Heart right ventricle (tissue), 16 donors: ENCODE measurements at regions of chr2 and their contacts with region 1.

Region 1: DNA sequence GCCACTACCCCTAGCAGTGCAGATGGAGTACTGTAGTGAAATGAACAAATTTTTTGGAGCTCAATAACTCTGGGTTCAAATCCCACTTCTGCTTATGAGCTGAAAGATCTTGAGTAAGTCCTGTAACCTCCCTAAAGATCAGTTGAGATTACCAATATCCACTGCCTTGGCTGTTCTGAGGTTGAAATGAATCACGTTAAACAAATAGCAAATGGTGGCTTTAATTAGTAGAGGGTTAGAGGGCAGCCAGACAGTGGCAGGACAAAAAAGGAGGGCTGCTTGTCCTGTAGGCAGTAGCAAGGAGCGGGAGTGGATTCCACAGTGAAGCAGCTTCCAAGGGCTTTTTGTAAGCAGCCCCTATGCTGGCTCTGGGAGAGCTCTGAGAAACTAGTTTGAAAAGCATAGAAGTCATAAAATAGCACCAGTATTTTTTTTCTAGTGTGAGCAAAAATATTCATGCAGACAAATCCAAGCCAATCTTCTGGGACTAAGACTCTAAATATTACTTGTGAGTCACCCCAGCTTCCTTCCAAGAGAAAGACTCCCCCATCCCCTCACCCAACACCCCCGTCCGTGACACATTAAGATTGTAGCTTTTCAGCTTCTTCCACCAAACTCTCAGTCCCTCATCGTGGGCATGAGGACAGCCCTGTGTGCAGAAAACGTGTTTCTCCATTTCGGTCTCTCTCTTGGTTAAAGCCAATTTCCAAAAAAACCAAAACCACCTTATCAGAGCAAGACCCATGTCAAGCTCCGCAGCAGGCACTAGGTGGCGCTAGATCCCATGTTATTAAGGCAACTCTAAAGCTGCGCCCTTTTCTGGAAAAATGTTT is 123.5 kb upstream of the LGALSL start:
- DNase-seq: peak; percentile 71 to 86
- ATAC-seq: peak; percentile 58 to 82 (median 74)
- H3K4me3 ChIP-seq: peak overlapping the region in 6 of 10 donors; percentile 16 to 32 (median 24)
- H3K27ac ChIP-seq: peak overlapping the region; percentile 58 to 85 (median 77)
- H3K4me1 ChIP-seq: peaks cover 15 to 49% (median 40%) of the 10 kb centered on the region in 9 donors
- H3K27me3 ChIP-seq: no peaks in the 10 kb centered on the region
- CTCF ChIP-seq: peak; percentile 86 to 95 (median 90)

Region 2: GRCh38 chr2:64045938-64046337 is 284.6 kb before region 1 on chr2:
- intact Hi-C with region 1: loop called in 8 of 10 experiments (anchors 1 to 5 kb)
- DNase-seq: no peak
- ATAC-seq: no peak
- H3K4me3 ChIP-seq: no peak overlapping the region
- H3K27ac ChIP-seq: no peak overlapping the region
- H3K4me1 ChIP-seq: peaks cover 0 to 8% (median 7%) of the 10 kb centered on the region in 9 donors
- H3K27me3 ChIP-seq: no peaks in the 10 kb centered on the region
- CTCF ChIP-seq: no peak

Region 3: DNA sequence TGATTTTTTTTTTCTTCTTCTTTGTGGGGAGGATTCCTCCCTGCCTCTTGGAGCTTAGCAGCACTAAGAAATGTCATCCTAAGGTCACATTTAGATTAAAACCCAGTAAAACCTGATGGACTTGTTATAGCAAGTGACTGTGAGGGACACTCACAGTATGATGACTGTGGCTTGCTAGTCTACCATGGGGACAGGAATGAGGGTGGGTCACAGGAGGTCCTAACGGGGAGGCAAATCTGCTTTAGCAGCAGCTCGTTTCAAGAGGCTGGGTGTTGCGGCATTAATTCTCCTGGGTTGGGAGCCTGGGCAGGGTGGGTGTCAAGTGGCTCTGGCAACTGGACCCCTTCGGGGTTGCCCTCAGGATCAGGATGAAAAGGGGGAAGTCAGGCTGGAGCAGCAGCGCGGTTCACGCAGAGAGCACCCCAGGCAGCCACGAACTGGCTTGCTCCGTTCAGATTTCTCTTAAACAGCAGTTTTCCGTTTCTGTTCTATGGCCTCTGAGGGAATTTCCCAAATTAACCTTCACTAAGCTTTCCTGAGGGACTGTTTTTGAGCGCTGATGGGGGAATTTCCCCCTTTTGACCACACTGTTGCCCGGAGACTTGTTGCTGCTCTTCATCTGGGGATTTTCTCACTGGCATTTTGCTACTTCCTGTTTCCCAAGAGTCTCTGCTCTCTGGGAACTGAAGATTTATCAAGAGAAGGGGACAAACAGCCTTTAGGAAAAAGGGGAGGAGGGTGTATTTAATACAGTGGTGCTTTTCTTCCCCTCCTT is 126.5 kb before region 1 on chr2:
- intact Hi-C with region 1: loop called in 1 of 10 experiments (anchors 5 kb)
- DNase-seq: peak; percentile 30 to 40
- ATAC-seq: peak in 7 of 8 donors; percentile 55 to 74 (median 68)
- H3K4me3 ChIP-seq: peak overlapping the region in 6 of 10 donors; percentile 11 to 37 (median 26)
- H3K27ac ChIP-seq: peak overlapping the region; percentile 48 to 89 (median 78)
- H3K4me1 ChIP-seq: peaks cover 2 to 57% (median 40%) of the 10 kb centered on the region in 9 donors
- H3K27me3 ChIP-seq: no peaks in the 10 kb centered on the region
- CTCF ChIP-seq: no peak

Region 4: GRCh38 chr2:64363848-64364247 is 33.4 kb after region 1 on chr2:
- intact Hi-C with region 1: no loop called
- DNase-seq: no peak
- ATAC-seq: no peak
- H3K4me3 ChIP-seq: no peak overlapping the region
- H3K27ac ChIP-seq: no peak overlapping the region
- H3K4me1 ChIP-seq: peaks cover 0 to 16% (median 10%) of the 10 kb centered on the region in 9 donors
- H3K27me3 ChIP-seq: peaks cover 0 to 55% (median 4%) of the 10 kb centered on the region in 7 donors
- CTCF ChIP-seq: no peak

Region 5: DNA sequence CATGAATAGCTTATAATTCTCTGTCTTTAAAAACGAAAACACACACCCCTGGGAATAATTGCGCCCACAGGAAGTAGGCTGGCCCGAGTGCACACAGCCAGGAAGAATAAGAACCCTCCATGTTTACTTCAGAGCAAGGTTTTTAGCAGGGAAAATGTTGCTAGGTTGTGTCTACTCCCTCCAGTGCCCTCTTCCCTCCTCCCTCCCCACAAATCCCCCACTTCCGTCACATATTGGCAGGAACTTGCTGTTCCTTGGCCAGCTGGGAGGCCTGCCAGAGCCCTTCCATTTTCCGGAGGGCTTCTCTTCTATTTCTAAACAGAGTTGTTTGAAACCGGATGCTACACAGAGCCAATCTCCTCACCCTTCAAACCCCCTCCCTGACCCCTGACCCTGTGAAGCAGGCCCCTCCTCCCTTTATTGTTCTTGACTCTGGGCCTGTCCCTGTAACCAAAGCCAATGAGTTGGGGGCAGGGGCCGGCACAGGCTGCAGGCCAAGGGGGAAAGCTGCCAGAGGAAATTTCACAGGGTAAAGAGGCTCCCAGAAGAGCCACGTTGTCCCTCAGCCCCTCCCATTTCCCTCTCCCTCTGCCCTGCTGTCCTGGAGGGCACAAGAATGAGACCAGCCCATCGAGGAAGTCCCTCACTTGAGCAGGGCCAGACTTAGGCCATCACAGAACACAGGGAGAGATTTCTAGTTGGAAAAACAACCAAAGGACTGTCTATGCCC is 73.7 kb after region 1 on chr2:
- intact Hi-C with region 1: loop called in 5 of 10 experiments (anchors 2 to 10 kb)
- DNase-seq: peak; percentile 87 to 93
- ATAC-seq: peak; percentile 90 to 96 (median 94)
- H3K4me3 ChIP-seq: peak overlapping the region in 4 of 10 donors; percentile 1 to 27 (median 6)
- H3K27ac ChIP-seq: peak overlapping the region; percentile 56 to 92 (median 86)
- H3K4me1 ChIP-seq: peaks cover 14 to 52% (median 45%) of the 10 kb centered on the region in 9 donors
- H3K27me3 ChIP-seq: no peaks in the 10 kb centered on the region
- CTCF ChIP-seq: no peak

Region 6: DNA sequence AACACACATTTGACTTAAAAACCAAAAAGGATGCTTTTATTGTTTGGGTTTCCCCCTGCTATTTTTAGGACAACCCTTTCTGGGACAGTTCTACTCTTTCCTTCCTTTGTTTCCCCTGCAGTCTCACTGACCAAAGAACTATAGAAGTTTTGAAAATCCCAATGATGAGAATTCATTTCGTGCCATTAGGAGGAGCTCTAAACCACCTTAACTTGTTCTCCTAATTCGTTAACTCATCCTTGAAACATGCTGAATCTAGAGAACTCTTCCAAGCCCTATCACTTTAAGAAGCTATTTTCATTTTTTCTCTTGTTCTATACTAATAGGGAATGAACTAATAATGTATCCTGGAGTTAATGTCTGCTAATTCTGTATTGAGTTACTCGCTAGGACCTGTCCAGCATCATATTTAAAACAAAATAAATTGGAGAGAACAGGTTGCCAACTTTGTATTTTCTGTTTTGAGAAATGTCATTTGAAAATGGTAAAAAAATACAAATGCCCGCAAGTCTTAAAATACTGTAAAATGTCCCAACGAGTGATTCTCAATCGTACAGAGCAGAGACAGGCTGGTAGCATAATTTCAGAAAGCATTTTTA is 256.5 kb after region 1 on chr2:
- intact Hi-C with region 1: loop called in 1 of 10 experiments (anchors 5 kb)
- DNase-seq: no peak
- ATAC-seq: peak in 6 of 8 donors; percentile 55 to 77 (median 65)
- H3K4me3 ChIP-seq: no peak overlapping the region
- H3K27ac ChIP-seq: no peak overlapping the region
- H3K4me1 ChIP-seq: peaks cover 0 to 13% (median 8%) of the 10 kb centered on the region in 9 donors
- H3K27me3 ChIP-seq: no peaks in the 10 kb centered on the region
- CTCF ChIP-seq: peak; percentile 27 to 80 (median 65)

Region 7: DNA sequence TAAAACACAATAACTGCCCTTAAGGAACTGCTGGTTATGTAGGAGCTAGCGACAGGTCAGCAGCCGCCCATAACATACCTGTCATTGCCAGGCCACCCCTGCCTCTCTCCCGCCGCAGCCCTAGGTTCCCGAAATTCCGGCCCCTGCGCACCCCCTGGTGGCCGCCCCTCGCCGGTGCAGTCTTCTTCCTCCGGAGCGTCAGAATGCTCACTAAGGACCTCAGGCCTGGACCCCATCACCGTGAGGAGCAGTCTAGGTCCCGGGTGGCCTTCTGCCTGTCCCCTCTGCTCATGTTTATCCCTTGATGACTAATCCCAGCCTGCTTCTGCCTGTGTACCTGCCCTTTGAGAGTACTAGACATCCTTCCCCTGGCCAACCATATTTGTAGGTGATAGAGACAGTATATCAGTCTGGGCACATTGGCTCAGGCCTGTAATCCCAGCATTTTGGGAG is 543.0 kb after region 1 on chr2:
- intact Hi-C with region 1: loop called in 7 of 10 experiments (anchors 5 to 10 kb)
- DNase-seq: peak; percentile 75 to 84
- ATAC-seq: peak; percentile 75 to 90 (median 82)
- H3K4me3 ChIP-seq: peak overlapping the region in 7 of 10 donors; percentile 19 to 36 (median 29)
- H3K27ac ChIP-seq: no peak overlapping the region
- H3K4me1 ChIP-seq: peaks cover 0 to 22% (median 15%) of the 10 kb centered on the region in 9 donors
- H3K27me3 ChIP-seq: no peaks in the 10 kb centered on the region
- CTCF ChIP-seq: peak; percentile 96 to 98 (median 97)